Activated B cell treated with CpG ODN at 0.5 μM for 24 hours (primary cell): ENCODE measurements at regions of chr20 and their contacts with region 1.

Region 1: GRCh38 chr20:3209257-3209945 is at the start of gene ITPA:
- DNase-seq: peak; percentile 58
- ATAC-seq: peak; percentile 47
- H3K4me3 Mint-ChIP-seq: peak within 1 kb of the TSS; percentile 98
- H3K27ac Mint-ChIP-seq: peak within 1 kb of the TSS; percentile 86
- H3K4me1 Mint-ChIP-seq: peaks cover 29% of the 10 kb centered on the region
- H3K27me3 Mint-ChIP-seq: no peaks in the 10 kb centered on the region
- CTCF ChIP-seq: no peak
- total RNA-seq, gene ITPA: 82.1 and 84.8 TPM in 2 replicates

Region 2: DNA sequence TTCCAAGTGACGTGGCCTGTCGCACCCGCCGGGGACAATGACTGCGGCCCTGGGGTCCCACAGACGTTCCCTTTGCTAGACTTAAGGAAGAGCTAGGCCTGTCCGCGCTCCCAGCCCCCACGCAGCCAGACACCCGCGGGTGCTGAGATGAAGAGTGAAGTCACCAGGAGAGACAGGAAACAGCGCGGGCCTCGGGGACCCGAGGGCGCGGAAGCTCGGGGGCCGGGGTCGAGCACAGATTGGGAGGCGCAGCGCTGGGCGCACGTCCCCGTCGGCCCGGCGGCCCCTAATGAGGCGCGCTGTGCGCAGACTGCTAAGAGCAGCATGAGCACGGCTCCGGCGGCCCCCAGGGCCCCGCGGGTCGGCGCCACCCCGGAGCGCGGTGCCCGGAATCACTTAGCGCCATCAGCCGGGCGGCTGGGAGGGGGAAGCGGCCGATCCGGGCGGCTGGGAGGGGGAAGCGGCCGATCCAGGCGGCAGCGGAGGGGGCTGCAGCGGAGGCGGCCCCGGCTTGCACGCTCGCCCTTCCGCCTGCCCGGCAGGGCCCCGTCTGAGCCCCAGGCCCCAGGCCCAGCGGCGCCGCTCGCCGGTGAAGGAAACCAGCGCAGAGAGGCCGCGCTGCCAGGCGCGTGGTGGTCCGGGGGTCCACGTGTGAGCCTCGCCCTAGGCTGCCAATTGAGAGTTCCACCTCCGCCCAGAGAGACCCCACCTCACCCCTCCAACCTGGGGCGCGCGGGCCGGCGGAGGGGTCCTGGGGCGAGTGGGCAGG is 116.6 kb before region 1 on chr20:
- CTCF ChIA-PET with region 1: no interaction called
- POLR2A ChIA-PET with region 1: interaction called, 10 read pairs
- intact Hi-C with region 1: no loop called
- DNase-seq: peak; percentile 47
- ATAC-seq: peak; percentile 54
- H3K4me3 Mint-ChIP-seq: peak overlapping the region; percentile 94
- H3K27ac Mint-ChIP-seq: peak overlapping the region; percentile 95
- H3K4me1 Mint-ChIP-seq: peaks cover 23% of the 10 kb centered on the region
- H3K27me3 Mint-ChIP-seq: peaks cover 22% of the 10 kb centered on the region
- CTCF ChIP-seq: no peak

Region 3: GRCh38 chr20:3470627-3471396 is 261.4 kb after region 1 on chr20 and contains the start of gene ATRN:
- CTCF ChIA-PET with region 1: no interaction called
- POLR2A ChIA-PET with region 1: no interaction called
- intact Hi-C with region 1: loop called (anchors 5 kb)
- DNase-seq: peak; percentile 98
- ATAC-seq: peak; percentile 94
- H3K4me3 Mint-ChIP-seq: peak within 1 kb of the TSS; percentile 93
- H3K27ac Mint-ChIP-seq: peak within 1 kb of the TSS; percentile 64
- H3K4me1 Mint-ChIP-seq: peaks cover 32% of the 10 kb centered on the region
- H3K27me3 Mint-ChIP-seq: peaks cover 1% of the 10 kb centered on the region
- CTCF ChIP-seq: no peak
- total RNA-seq, gene ATRN: 11.5 and 13.0 TPM in 2 replicates